Common myeloid progenitor, CD34-positive (primary cell): ENCODE measurements at regions of chr18 and their contacts with region 1.

Region 1: DNA sequence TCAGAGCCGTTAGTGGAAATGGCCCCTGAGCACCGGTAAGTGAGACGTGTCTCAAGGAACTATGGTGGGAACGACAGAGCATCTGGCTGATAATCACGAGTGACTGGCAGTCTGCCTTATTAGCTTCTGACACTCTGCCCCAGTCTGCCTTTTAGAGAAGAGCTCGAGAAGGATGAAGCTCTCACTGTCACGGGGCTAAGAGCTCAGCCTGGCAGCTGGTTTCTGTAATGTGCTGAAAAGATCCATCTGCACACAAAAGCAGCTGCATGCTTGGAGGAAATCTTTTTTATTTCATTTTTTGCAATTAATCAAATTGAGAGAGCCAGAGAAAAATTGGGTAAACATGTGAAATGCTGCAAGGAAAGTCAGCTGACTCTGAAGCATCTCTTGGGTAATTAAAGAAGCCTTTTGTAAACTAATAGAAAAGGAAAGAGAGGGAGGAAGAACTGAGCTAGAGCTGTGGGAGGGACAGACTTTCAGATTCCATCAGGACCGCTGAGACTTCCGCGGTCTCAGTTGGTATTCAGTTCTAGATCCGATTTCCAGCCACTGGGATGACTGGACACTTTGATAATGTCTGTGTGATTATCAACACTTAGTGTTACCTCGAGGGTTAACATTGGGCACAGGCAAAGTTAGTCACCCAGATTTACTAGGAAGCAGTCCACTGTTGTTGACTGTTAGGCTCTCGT is 24.4 kb downstream of the MBP start:
- DNase-seq: peak in 2 of 3 donors; percentile 79 to 85
- H3K4me3 ChIP-seq: peak overlapping the region in 3 of 7 experiments; percentile 29 to 59 (median 50)
- H3K27ac ChIP-seq: peak overlapping the region; percentile 12 to 28
- H3K4me1 ChIP-seq: peaks cover 32 to 100% (median 84%) of the 10 kb centered on the region in 4 experiments
- H3K27me3 ChIP-seq: no peaks in the 10 kb centered on the region

Region 2: DNA sequence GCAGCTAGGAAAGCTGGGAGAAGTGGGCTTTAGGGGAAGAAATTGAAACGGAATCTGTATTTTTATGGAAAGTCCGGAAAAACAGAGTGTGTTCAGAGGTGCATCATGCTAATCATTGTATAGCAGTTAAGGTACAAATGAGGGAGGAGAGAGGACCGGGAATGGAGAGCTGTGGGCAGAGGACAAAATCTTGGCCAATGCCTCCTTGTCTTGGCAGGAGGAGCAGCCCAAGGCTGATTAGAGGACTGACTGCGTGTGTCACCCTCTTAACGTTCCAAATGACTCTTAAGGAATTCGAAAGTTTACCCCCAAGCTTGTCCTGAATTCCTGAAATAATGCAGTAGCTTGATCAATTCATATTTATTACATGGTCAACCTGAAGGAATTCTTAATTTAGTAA is 204.8 kb before region 1 on chr18:
- CTCF ChIA-PET with region 1: no interaction called
- POLR2A ChIA-PET with region 1: no interaction called
- DNase-seq: no peak
- H3K4me3 ChIP-seq: no peak overlapping the region
- H3K27ac ChIP-seq: no peak overlapping the region
- H3K4me1 ChIP-seq: no peaks in the 10 kb centered on the region
- H3K27me3 ChIP-seq: no peaks in the 10 kb centered on the region

Region 3: DNA sequence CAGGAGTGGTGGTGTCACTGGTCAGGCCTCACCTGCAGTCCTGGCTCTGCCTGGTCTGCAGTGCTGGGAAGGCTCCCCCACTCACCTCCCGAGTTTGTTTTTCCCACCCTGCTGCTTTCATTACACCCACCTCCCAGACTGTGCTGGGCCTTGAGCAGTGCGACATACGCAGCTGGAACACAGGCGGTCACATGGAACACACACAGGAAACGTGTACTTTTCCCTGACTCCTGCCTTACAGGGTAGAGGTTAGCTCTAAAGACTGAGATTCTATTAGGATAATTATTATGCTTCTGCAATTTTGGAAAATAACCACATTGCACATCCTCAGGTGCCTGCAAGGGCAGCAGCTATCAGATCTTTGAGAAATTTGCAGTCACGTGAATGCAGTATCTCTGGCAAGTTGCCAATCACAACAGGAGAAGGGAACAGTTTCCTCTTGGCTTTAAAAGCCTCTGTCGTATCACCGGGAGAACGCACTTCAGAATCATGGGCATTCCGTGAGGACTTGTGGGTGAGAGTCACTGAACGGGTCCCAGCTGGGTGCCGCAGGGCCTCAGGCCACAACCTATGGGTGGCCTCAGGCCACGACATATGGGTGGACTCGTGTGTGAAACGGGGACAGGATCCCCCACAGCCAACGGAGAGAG is 149.3 kb before region 1 on chr18:
- CTCF ChIA-PET with region 1: no interaction called
- POLR2A ChIA-PET with region 1: no interaction called
- DNase-seq: no peak
- H3K4me3 ChIP-seq: no peak overlapping the region
- H3K27ac ChIP-seq: no peak overlapping the region
- H3K4me1 ChIP-seq: no peaks in the 10 kb centered on the region
- H3K27me3 ChIP-seq: no peaks in the 10 kb centered on the region

Region 4: DNA sequence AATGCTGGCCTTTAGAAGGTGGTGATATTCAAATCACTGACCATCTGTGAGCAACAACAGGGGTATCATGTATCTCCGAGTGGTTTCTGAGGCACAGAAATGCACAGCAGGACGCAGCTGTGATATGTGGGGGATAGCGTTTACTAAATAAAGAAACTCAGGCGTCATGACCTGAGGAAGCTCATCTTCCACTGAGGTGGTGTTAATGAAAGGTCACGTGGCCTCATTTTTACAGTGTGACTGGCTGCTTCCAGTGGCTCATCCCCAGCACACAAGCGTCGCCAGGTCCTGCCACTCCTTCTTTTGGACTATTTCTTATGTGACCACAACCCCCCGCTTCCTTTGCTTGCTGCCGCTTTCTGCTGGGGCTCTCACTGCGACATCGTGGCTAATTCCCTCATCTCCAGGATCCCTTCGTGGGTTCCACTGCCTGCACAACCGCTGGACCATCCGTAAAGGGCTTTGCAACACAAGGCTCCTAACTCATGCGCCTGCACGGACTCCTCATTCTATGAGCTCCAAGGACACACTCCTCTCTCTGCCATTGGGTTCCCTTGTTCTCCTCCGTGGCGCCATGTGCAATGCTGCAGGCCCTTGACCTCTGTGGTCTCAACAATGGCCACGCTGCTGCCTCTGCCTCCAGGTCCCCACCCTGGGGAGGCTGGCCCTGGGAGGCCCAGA is 84.9 kb before region 1 on chr18:
- CTCF ChIA-PET with region 1: no interaction called
- POLR2A ChIA-PET with region 1: no interaction called
- DNase-seq: peak in 1 of 3 donors; percentile 21
- H3K4me3 ChIP-seq: no peak overlapping the region
- H3K27ac ChIP-seq: no peak overlapping the region
- H3K4me1 ChIP-seq: peaks cover 0 to 4% (median 0%) of the 10 kb centered on the region in 4 experiments
- H3K27me3 ChIP-seq: no peaks in the 10 kb centered on the region

Region 5: GRCh38 chr18:77124452-77124922 is 16.3 kb after region 1 on chr18:
- CTCF ChIA-PET with region 1: interaction called, 55 read pairs
- POLR2A ChIA-PET with region 1: interaction called, 3 read pairs
- DNase-seq: peak in 2 of 3 donors; percentile 64 to 77
- H3K4me3 ChIP-seq: peak overlapping the region in 5 of 7 experiments; percentile 27 to 60 (median 52)
- H3K27ac ChIP-seq: peak overlapping the region in 1 of 2 experiments; percentile 78
- H3K4me1 ChIP-seq: peaks cover 49 to 97% (median 87%) of the 10 kb centered on the region in 4 experiments
- H3K27me3 ChIP-seq: no peaks in the 10 kb centered on the region

Region 6: DNA sequence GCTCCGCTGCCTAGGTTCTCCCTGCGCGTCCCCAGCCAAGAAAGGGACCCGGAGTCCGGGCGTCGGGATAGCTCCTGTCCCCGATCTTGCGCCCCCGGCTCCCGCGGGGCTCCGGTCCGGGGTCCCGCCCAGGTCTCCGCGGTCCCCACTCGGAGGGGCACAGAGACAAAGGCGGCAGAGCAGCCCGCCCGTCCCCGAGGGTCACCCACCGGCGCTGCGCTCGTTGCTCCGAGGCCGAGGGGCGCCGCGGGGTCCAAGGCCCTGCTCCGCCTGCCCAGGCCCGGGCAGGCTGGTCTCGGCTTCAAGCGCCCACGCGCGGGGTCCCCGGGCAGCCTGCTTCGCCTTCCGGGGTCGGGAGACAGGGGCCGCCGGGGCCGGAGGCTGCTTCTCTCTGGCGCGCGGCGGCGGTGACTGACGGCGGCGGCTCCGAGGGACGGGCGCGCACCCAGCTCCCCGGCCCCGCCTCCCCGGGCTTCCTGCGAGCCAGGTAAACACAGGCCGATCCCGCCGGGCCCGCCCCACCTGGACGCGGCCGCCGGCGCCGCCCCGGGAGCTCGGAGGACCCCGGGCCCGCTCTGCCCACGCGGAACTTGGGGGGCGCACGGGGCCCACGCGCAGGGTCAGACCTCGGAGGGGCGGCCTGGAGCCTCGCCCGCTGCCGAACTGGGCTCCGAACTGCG is 24.4 kb after region 1 on chr18 and contains the start of gene MBP:
- CTCF ChIA-PET with region 1: interaction called, 55 read pairs
- POLR2A ChIA-PET with region 1: interaction called, 3 read pairs
- DNase-seq: peak in 1 of 3 donors; percentile 60
- H3K4me3 ChIP-seq: peak within 1 kb of the TSS; percentile 62 to 86 (median 78)
- H3K27ac ChIP-seq: peak within 1 kb of the TSS; percentile 72 to 87
- H3K4me1 ChIP-seq: peaks cover 22 to 73% (median 61%) of the 10 kb centered on the region in 4 experiments
- H3K27me3 ChIP-seq: no peaks in the 10 kb centered on the region